Activated CD4-positive, alpha-beta T cell treated with anti-CD3 and anti-CD28 coated beads, Interleukin-2, amount 10 ng/mL, durations not matched to agents 24 days and 14 days (primary cell): ENCODE measurements at regions of chr3 and their contacts with region 1.

Region 1: GRCh38 chr3:188309437-188310269 is 155.7 kb downstream of the LPP start:
- DNase-seq: peak; percentile 79
- H3K4me3 Mint-ChIP-seq: peak overlapping the region; percentile 62
- H3K27ac Mint-ChIP-seq: peak overlapping the region; percentile 87
- H3K4me1 Mint-ChIP-seq: peaks cover 22% of the 10 kb centered on the region
- H3K27me3 Mint-ChIP-seq: peaks cover 3% of the 10 kb centered on the region

Region 2: GRCh38 chr3:188257384-188258026 is 52.1 kb before region 1 on chr3:
- intact Hi-C with region 1: loop called (anchors 1 kb)
- DNase-seq: no peak
- H3K4me3 Mint-ChIP-seq: no peak overlapping the region
- H3K27ac Mint-ChIP-seq: peak overlapping the region; percentile 85
- H3K4me1 Mint-ChIP-seq: peaks cover 47% of the 10 kb centered on the region
- H3K27me3 Mint-ChIP-seq: no peaks in the 10 kb centered on the region

Region 3: GRCh38 chr3:188294823-188295487 is 14.7 kb before region 1 on chr3:
- intact Hi-C with region 1: loop called (anchors 1 kb)
- DNase-seq: no peak
- H3K4me3 Mint-ChIP-seq: no peak overlapping the region
- H3K27ac Mint-ChIP-seq: no peak overlapping the region
- H3K4me1 Mint-ChIP-seq: peaks cover 71% of the 10 kb centered on the region
- H3K27me3 Mint-ChIP-seq: no peaks in the 10 kb centered on the region

Region 4: DNA sequence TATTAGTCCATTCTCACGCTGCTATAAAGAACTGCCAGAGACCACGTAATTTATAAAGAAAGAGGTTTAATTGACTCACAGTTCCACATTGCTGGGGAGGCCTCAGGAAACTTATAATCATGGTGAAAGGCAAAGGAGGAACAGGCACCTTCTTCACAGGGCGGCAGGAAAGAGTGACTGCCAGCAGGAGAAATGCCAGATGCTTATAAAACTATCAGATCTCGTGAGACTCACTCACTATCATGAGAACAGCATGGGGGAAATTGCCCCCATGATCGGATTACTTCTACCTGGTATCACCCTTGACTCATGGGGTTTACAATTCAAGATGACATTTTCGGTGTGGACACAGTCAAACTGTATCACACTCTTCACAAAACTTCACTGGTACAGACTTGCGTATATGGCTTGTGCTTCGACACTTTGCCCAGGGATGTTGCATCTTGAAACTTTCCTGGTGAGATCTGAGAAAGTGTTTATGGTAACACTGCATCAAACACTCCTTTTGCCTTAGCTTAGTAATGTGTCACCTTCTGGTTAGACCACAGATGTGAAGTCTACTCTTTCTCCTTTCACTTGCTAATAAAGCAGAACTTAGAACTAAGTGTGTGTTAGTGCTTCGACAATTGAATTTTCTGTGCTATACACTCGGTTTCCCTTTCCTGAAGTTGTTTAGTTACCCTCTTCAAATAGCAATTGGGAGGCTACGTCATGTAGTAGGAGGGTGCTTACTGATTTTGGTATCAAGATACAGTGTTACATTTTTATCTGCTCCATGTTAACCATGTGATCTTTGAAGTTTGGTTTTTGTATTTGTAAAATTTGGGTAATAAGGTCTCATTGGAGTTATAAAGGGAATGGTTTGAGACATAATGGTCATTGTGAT is 30.0 kb after region 1 on chr3:
- intact Hi-C with region 1: loop called (anchors 1 kb)
- DNase-seq: peak; percentile 81
- H3K4me3 Mint-ChIP-seq: peak overlapping the region; percentile 66
- H3K27ac Mint-ChIP-seq: peak overlapping the region; percentile 93
- H3K4me1 Mint-ChIP-seq: peaks cover 34% of the 10 kb centered on the region
- H3K27me3 Mint-ChIP-seq: peaks cover 6% of the 10 kb centered on the region

Region 5: DNA sequence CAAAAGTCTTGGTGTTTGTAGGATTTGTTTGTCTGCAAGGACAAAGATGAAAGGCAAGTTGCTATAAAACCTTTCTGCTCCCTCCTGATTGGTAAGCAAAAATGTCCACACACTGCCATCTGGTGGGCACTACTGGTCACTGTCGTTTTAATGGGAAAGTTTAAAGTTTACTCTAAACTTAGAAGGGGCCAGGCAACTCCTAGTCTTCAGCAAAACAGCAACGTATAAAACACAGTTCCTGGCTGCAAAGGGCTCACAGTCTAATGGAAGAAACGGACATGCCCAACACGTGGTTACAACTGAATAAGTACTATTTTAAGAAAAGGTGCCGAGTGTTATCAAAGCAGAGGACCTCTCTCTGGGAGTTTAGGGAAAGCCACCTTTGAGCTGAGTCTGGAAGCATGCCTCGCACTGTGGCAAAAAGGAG is 838.4 kb after region 1 on chr3:
- intact Hi-C with region 1: loop called (anchors 10 kb)
- DNase-seq: peak; percentile 89
- H3K4me3 Mint-ChIP-seq: no peak overlapping the region
- H3K27ac Mint-ChIP-seq: no peak overlapping the region
- H3K4me1 Mint-ChIP-seq: peaks cover 28% of the 10 kb centered on the region
- H3K27me3 Mint-ChIP-seq: peaks cover 10% of the 10 kb centered on the region